ENCODE measurements at regions of chr1 and their contacts with region 1.

Region 1: GRCh38 chr1:28642847-28643635 is at the start of gene TAF12:
- DNase-seq: peak; percentile 98
- H3K4me3 ChIP-seq: peak within 1 kb of the TSS; percentile 70 to 89 (median 82)
- H3K27ac ChIP-seq: peak within 1 kb of the TSS; percentile 91
- H3K4me1 ChIP-seq: peaks cover 20% of the 10 kb centered on the region
- H3K27me3 ChIP-seq: no peaks in the 10 kb centered on the region
- CTCF ChIP-seq: peak in 1 of 2 donors; percentile 48
- POLR2A ChIP-seq: peak; percentile 100
- total RNA-seq, gene TAF12: 15.3 and 18.2 TPM in 2 replicates

Region 2: GRCh38 chr1:28235755-28236655 is 407.0 kb before region 1 on chr1 and contains the start of gene ATP5IF1:
- CTCF ChIA-PET with region 1: no interaction called
- POLR2A ChIA-PET with region 1: interaction called, 11 read pairs
- dilution Hi-C with region 1: no loop called
- intact Hi-C with region 1: no loop called
- DNase-seq: peak; percentile 99
- H3K4me3 ChIP-seq: peak within 1 kb of the TSS; percentile 49 to 84 (median 64)
- H3K27ac ChIP-seq: peak within 1 kb of the TSS; percentile 1
- H3K4me1 ChIP-seq: peaks cover 17% of the 10 kb centered on the region
- H3K27me3 ChIP-seq: no peaks in the 10 kb centered on the region
- CTCF ChIP-seq: no peak
- POLR2A ChIP-seq: peak; percentile 97
- total RNA-seq, gene ATP5IF1: 133 and 144 TPM in 2 replicates

Region 3: GRCh38 chr1:28518000-28518744 is 124.9 kb before region 1 on chr1:
- CTCF ChIA-PET with region 1: no interaction called
- POLR2A ChIA-PET with region 1: no interaction called
- dilution Hi-C with region 1: no loop called
- intact Hi-C with region 1: loop called (anchors 5 kb)
- DNase-seq: peak; percentile 91
- H3K4me3 ChIP-seq: peak overlapping the region; percentile 52 to 73 (median 57)
- H3K27ac ChIP-seq: peak overlapping the region; percentile 46
- H3K4me1 ChIP-seq: peaks cover 14% of the 10 kb centered on the region
- H3K27me3 ChIP-seq: no peaks in the 10 kb centered on the region
- CTCF ChIP-seq: peak; percentile 94 to 98
- POLR2A ChIP-seq: peak; percentile 87

Region 4: GRCh38 chr1:29181413-29182225 is 538.6 kb after region 1 on chr1 and contains the start of gene SRSF4:
- CTCF ChIA-PET with region 1: no interaction called
- POLR2A ChIA-PET with region 1: no interaction called
- dilution Hi-C with region 1: no loop called
- intact Hi-C with region 1: loop called (anchors 5 kb)
- DNase-seq: peak; percentile 99
- H3K4me3 ChIP-seq: peak within 1 kb of the TSS; percentile 81 to 99 (median 90)
- H3K27ac ChIP-seq: peak within 1 kb of the TSS; percentile 99
- H3K4me1 ChIP-seq: peaks cover 19% of the 10 kb centered on the region
- H3K27me3 ChIP-seq: no peaks in the 10 kb centered on the region
- CTCF ChIP-seq: peak; percentile 68 to 84
- POLR2A ChIP-seq: peak; percentile 87
- total RNA-seq, gene SRSF4: 92.9 and 108 TPM in 2 replicates

Region 5: DNA sequence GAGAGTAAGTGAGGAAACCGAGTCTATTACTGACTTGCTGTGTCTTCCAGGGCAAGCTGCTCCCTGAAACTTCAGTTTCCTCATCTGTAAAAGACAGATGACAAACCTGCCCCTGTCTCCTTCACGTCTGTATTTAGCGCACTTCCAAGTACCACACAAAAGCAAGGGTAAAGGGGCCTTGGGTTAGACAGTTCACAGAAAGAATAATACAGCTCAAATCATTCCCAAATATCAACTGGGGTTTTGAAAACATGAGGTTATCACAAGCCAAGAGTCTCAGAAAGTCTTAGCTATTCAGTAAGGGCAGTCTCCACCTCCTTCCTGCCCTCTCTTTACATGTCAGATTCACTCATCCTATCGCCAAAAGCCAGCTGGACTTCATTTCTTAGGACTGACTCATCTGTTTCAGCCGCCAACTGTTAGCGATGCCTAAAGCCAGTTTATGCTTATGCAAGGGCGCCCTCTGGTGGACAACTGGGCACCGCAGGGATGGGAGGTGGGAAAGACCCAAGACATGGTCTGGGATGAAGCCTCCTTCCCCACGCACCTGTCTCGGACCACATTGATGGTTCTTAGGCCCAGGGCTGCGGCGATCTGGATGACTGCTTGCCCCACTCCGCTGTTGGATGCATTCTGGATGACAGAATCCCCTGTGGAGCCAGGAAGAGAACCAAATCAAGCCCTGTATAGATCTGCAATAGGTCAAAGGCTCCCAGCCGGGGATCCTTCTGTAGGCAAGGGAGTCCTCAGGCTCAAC is 559.7 kb after region 1 on chr1:
- CTCF ChIA-PET with region 1: no interaction called
- POLR2A ChIA-PET with region 1: no interaction called
- dilution Hi-C with region 1: no loop called
- intact Hi-C with region 1: loop called (anchors 5 kb)
- DNase-seq: peak; percentile 96
- H3K4me3 ChIP-seq: no peak overlapping the region
- H3K27ac ChIP-seq: peak overlapping the region; percentile 63
- H3K4me1 ChIP-seq: peaks cover 10% of the 10 kb centered on the region
- H3K27me3 ChIP-seq: no peaks in the 10 kb centered on the region
- CTCF ChIP-seq: peak; percentile 89 to 97
- POLR2A ChIP-seq: no peak

Measured in endothelial cell of umbilical vein (primary cell).